Breast epithelium (tissue), 4 donors: ENCODE measurements at regions of chr7 and their contacts with region 1.

Region 1: DNA sequence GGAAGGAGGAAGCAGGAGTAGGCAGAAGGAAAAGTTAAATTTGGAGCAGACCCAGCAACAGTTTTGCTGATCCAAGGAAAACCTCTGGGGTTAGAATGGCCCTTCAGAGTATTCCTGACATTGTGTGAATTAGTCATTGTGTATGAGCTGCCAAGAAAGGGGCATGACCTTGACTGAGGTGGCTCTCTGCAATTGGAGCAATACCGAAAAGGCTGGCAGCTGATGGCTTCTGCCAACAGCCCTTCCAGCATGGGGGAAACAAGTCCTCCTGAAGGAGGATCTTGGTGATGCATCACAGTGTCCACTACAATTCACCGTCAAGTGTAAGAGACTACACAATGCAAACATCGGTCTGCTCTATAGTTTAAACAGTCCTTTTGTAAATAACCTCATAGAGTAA is 20.6 kb upstream of the WASL start:
- DNase-seq: no peak
- H3K4me3 ChIP-seq: no peak overlapping the region
- H3K27ac ChIP-seq: no peak overlapping the region
- H3K4me1 ChIP-seq: no peaks in the 10 kb centered on the region
- H3K27me3 ChIP-seq: no peaks in the 10 kb centered on the region
- CTCF ChIP-seq: no peak
- POLR2A ChIP-seq: no peak

Region 2: GRCh38 chr7:123030631-123031030 is 738.8 kb before region 1 on chr7:
- intact Hi-C with region 1: loop called (anchors 10 kb)
- DNase-seq: no peak
- H3K4me3 ChIP-seq: no peak overlapping the region
- H3K27ac ChIP-seq: no peak overlapping the region
- H3K4me1 ChIP-seq: no peaks in the 10 kb centered on the region
- H3K27me3 ChIP-seq: no peaks in the 10 kb centered on the region
- CTCF ChIP-seq: no peak
- POLR2A ChIP-seq: no peak

Region 3: DNA sequence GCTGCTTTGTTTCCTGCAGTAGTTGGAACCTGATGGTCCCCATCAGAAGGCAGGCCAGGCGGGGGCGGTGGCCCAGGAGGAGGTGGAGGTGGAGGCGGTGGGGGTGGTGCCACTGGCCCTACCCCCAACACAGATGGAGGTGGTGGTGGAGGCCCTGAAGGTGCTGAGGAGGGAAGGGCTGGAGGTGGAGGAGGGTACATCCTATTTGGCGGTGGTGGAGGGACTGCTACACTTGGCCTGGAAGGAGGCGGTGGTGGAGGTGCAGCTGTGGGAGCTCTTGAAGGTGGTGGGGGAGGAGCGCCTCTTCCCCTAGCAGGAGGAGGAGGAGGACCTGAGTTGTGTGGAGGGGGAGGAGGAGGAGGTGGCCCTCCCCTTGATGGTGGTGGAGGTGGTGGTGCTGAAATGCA is 76.9 kb before region 1 on chr7:
- intact Hi-C with region 1: no loop called
- DNase-seq: no peak
- H3K4me3 ChIP-seq: no peak overlapping the region
- H3K27ac ChIP-seq: no peak overlapping the region
- H3K4me1 ChIP-seq: no peaks in the 10 kb centered on the region
- H3K27me3 ChIP-seq: no peaks in the 10 kb centered on the region
- CTCF ChIP-seq: no peak
- POLR2A ChIP-seq: no peak